Dorsolateral prefrontal cortex (tissue), 120 donors: ENCODE measurements at regions of chr7 and their contacts with region 1.

Region 1: DNA sequence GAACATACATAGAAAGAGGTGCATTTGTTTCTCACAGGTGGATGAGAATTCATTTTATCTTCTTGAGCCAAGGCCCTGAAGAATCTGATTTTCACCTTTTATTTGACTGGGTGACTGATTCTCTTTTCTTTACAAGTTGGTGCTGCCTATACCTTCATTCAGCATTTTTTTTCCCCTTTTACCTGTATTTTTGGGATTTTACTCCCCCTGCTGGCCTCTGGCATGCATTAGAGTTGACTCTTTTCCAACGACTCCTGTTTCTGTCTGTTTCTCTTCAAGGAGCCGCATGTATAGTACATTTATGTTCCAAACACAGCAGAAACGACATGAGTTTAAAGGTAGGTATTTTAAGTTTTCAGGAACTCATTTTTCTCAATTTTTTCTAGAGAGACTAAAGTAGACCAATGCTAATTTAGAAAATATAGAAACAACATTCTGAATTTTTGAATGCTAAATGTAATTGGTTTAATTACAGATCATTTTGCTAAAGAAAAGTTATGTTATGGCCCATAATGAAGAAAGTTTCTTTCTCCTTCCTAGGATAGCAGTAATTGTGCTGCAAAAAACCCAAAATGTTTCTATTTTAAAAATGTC is 149.8 kb upstream of the HDAC9 start:
- DNase-seq: peak in 6 of 10 donors; percentile 4 to 48 (median 32)
- H3K4me3 ChIP-seq: no peak overlapping the region
- H3K27ac ChIP-seq: no peak overlapping the region
- H3K27me3 ChIP-seq: no peaks in the 10 kb centered on the region
- CTCF ChIP-seq: peak; percentile 60 to 89 (median 74)

Region 2: DNA sequence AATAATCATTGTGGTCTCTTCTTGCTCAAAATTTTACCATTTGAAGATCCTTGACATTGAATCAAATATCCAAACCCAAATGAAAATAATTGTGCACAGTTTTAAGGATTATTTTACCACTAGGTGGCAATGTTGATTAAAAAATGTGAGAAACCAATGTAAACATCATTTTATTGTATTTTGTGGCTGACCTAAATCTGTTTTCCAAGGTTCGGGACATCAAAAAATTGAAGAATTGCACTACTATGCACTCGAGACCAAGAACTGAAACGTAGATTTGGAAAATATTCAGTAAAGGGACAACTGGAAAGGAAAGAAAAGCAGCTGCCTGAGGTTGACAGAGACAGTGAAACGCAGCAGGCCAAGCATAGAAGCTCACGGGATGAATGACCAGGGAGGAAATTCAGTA is 664.8 kb before region 1 on chr7:
- intact Hi-C with region 1: loop called in 1 of 2 experiments (anchors 5 kb)
- DNase-seq: no peak
- H3K4me3 ChIP-seq: peak overlapping the region in 8 of 59 donors; percentile 1 to 32 (median 12)
- H3K27ac ChIP-seq: peak overlapping the region in 8 of 59 donors; percentile 4 to 72 (median 37)
- H3K27me3 ChIP-seq: no peaks in the 10 kb centered on the region
- CTCF ChIP-seq: peak; percentile 37 to 91 (median 71)

Region 3: DNA sequence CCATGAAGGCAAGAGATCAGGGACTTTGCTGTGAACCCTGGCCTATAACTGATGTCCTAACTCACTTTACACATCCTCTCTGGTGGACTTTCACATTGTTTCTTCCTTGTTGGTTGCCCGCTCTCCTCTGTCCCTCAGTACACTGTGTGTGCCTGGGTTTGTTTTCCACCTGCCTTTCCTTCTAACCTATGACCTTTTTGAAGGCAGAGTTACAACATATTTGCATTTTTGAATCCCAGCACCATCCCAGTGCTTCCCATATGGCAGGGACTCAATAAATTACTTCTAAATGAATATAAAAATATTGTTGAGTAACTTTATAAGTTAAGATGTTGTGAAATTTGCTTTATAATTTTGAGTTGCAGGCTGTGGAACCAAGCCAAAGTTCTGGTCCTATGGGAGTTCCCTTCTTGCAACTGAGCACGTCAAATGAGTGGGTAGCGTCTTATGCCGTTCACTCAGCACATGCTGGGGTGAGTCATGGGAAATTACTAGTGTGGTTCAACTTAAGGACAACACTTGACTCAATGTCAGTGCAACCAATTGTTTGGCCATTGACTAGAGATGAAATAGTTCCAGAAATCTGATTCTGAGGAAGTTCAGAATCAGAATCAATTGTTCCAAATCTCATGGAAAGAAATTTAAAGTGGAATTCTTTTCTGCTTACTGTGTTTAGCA is 520.8 kb after region 1 on chr7:
- intact Hi-C with region 1: no loop called
- DNase-seq: no peak
- H3K4me3 ChIP-seq: no peak overlapping the region
- H3K27ac ChIP-seq: no peak overlapping the region
- H3K27me3 ChIP-seq: no peaks in the 10 kb centered on the region
- CTCF ChIP-seq: no peak